Esophagus muscularis mucosa (tissue), 4 donors: ENCODE measurements at regions of chr10 and their contacts with region 1.

Region 1: DNA sequence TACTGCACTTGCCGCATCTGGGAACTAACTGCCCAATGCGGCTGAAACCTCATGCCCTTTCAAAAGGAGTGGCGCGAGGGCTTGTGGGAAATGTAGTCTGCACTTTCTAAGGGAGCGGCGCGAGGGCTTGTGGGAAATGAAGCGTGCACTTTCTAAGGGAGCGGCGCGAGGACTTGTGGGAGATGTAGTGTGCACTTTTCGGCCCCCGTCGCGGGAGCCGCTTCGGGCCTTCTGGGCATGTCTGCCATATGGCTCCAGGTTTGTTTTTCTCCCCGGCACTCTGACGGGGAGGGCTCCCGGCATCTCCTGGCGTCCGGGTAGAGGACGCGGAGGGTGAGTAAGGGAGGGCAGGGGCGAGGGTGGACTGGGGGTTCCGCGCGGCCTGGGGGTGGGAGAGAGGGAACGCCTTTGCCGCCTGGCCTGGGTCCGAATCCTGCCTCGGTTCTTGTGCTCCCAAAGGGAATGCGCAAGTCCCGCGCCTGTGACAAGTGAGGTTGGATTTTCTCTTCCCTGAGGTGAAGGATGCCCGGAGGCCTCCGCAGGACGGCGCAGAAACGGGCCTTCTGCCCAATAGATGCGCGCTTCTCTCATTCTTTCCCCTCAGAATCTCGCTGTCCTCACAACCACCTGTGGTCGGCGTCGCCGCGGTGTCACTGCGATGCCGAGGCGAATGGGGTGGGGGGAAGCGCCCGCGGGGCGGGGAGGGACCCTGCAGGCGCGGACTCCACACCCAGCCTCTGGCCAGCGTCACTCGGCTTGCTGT is at the start of gene ZNF37A:
- DNase-seq: peak; percentile 99
- H3K4me3 ChIP-seq: peak within 1 kb of the TSS; percentile 62 to 94 (median 81)
- H3K27ac ChIP-seq: peak within 1 kb of the TSS; percentile 85 to 94 (median 88)
- H3K4me1 ChIP-seq: peaks cover 8 to 18% (median 17%) of the 10 kb centered on the region in 4 donors
- H3K27me3 ChIP-seq: no peaks in the 10 kb centered on the region
- CTCF ChIP-seq: peak in 1 of 3 experiments; percentile 28
- EP300 ChIP-seq: no peak
- POLR2A ChIP-seq: no peak
- total RNA-seq, gene ZNF37A: 11.4 to 19.1 (median 17.7) TPM

Region 2: GRCh38 chr10:37301271-37301670 is 793.1 kb before region 1 on chr10:
- intact Hi-C with region 1: no loop called
- DNase-seq: no peak
- H3K4me3 ChIP-seq: no peak overlapping the region
- H3K27ac ChIP-seq: no peak overlapping the region
- H3K4me1 ChIP-seq: no peaks in the 10 kb centered on the region
- H3K27me3 ChIP-seq: no peaks in the 10 kb centered on the region
- CTCF ChIP-seq: no peak
- EP300 ChIP-seq: no peak
- POLR2A ChIP-seq: no peak

Region 3: DNA sequence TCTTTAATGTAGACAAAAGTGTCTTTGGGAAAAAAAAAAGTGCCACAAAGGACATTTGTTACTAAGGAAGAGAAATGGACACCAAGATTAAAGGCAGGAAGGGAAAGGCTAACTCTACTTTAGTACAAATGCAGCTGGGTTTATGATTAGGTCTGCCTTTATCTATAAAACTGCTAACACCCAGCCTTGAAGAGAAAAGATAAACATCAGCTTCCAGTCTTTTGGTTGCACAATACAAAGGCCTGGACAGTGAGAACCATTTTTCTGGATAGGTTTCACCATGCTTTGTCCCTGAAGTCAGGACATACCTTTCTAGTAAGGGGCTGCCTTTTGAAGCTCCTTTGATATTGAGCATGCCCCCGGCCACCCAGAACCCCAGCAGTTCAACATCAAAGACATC is 282.0 kb before region 1 on chr10:
- intact Hi-C with region 1: no loop called
- DNase-seq: no peak
- H3K4me3 ChIP-seq: no peak overlapping the region
- H3K27ac ChIP-seq: no peak overlapping the region
- H3K4me1 ChIP-seq: no peaks in the 10 kb centered on the region
- H3K27me3 ChIP-seq: no peaks in the 10 kb centered on the region
- CTCF ChIP-seq: no peak
- EP300 ChIP-seq: no peak
- POLR2A ChIP-seq: no peak

Region 4: DNA sequence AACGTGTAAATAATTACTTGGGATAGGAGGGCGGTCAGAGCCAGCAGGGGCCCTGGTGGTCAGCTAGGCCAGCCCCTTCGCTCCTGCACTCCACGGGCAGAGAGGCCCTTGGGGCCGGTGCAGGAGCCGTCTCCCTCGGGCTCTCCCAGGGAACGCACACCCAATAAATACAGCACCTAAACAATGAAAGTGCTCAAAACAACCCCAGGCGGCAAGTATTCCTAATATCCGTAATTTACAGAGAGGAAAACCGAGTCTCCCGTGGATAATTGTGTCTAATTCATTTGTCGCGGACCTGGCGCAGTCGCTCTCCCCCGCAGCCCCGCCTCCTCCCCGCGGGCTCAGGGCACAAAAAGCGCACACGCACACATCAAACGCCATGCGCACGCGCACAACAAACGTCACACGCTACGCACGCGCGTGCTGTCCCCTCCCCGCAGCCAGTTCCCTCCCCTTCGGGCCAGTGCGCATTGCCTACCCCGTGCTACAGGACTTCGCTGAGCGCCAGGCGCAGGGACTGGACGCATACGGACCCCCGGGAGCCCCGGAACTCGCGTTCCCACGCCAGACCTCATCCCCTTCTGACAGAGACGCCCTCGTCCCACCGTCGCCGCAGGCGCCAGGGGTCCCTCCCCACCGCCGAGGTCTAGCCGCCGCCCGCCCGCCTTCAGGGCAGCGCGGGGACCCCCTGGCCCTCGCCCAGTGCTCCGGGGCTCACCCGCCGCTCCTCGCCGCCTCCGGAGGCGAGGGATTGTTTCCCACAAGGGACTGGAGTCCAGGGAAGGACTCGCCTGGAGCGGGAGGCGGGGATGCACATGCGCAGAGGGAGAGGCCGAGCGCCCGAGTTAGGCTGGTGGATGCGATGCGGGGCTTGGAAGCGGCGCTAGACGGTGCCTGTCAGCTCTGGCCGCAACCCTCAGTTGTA is 236.8 kb before region 1 on chr10 and contains the start of gene ZNF248:
- intact Hi-C with region 1: loop called (anchors 10 kb)
- DNase-seq: peak; percentile 98
- H3K4me3 ChIP-seq: peak within 1 kb of the TSS; percentile 90 to 99 (median 95)
- H3K27ac ChIP-seq: peak within 1 kb of the TSS; percentile 100
- H3K4me1 ChIP-seq: peaks cover 27 to 59% (median 54%) of the 10 kb centered on the region in 4 donors
- H3K27me3 ChIP-seq: no peaks in the 10 kb centered on the region
- CTCF ChIP-seq: peak in 1 of 3 experiments; percentile 2
- EP300 ChIP-seq: peak; percentile 87
- POLR2A ChIP-seq: peak; percentile 90
- total RNA-seq, gene ZNF248: 12.9 to 23.7 (median 17.6) TPM

Region 5: GRCh38 chr10:38010119-38010903 is 84.0 kb before region 1 on chr10 and contains the start of gene ZNF33A:
- intact Hi-C with region 1: loop called (anchors 10 kb)
- DNase-seq: peak; percentile 96
- H3K4me3 ChIP-seq: peak within 1 kb of the TSS; percentile 78 to 94 (median 82)
- H3K27ac ChIP-seq: peak within 1 kb of the TSS; percentile 98 to 100 (median 98)
- H3K4me1 ChIP-seq: peaks cover 7 to 24% (median 18%) of the 10 kb centered on the region in 4 donors
- H3K27me3 ChIP-seq: no peaks in the 10 kb centered on the region
- CTCF ChIP-seq: peak; percentile 4 to 22 (median 9)
- EP300 ChIP-seq: no peak
- POLR2A ChIP-seq: peak; percentile 23
- total RNA-seq, gene ZNF33A: 24.9 to 31.5 (median 26.4) TPM

Region 6: DNA sequence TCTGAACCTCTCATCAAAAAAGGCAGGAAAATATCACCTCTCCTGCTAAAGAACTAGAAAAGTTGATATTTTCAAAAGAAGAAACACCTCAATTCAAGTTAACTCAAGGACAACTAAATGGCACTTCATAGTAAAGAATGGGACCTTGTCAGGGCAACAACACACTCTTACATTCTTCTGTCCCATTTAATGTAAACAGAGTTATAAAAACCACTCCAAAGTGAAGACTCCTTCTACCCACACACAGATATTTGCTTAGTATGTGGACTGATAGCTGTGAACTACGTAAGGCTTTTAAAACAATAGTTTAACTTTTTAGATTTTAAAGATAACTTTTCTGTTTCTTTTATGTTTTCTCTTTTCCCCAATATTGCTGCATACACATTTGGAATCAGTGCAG is 118.1 kb after region 1 on chr10:
- intact Hi-C with region 1: no loop called
- DNase-seq: no peak
- H3K4me3 ChIP-seq: no peak overlapping the region
- H3K27ac ChIP-seq: no peak overlapping the region
- H3K4me1 ChIP-seq: no peaks in the 10 kb centered on the region
- H3K27me3 ChIP-seq: no peaks in the 10 kb centered on the region
- CTCF ChIP-seq: no peak
- EP300 ChIP-seq: no peak
- POLR2A ChIP-seq: no peak

Region 7: GRCh38 chr10:38226385-38226784 is 132.0 kb after region 1 on chr10:
- intact Hi-C with region 1: no loop called
- DNase-seq: no peak
- H3K4me3 ChIP-seq: no peak overlapping the region
- H3K27ac ChIP-seq: no peak overlapping the region
- H3K4me1 ChIP-seq: no peaks in the 10 kb centered on the region
- H3K27me3 ChIP-seq: no peaks in the 10 kb centered on the region
- CTCF ChIP-seq: no peak
- EP300 ChIP-seq: no peak
- POLR2A ChIP-seq: no peak